ENCODE measurements at regions of chr6 and their contacts with region 1.

Region 1: GRCh38 chr6:29887819-29888776 is 54.2 kb upstream of the HLA-A start:
- DNase-seq: peak; percentile 93

Region 2: GRCh38 chr6:29926413-29927274 is 38.5 kb after region 1 on chr6:
- intact Hi-C with region 1: loop called (anchors 5 kb)
- DNase-seq: peak; percentile 93

Region 3: GRCh38 chr6:29942275-29943052 is 54.4 kb after region 1 on chr6 and contains the start of gene HLA-A:
- intact Hi-C with region 1: loop called (anchors 5 kb)
- DNase-seq: peak; percentile 96
- total RNA-seq, gene HLA-A: 268 TPM